Naive thymus-derived CD4-positive, alpha-beta T cell (primary cell): ENCODE measurements at regions of chr4 and their contacts with region 1.

Region 1: DNA sequence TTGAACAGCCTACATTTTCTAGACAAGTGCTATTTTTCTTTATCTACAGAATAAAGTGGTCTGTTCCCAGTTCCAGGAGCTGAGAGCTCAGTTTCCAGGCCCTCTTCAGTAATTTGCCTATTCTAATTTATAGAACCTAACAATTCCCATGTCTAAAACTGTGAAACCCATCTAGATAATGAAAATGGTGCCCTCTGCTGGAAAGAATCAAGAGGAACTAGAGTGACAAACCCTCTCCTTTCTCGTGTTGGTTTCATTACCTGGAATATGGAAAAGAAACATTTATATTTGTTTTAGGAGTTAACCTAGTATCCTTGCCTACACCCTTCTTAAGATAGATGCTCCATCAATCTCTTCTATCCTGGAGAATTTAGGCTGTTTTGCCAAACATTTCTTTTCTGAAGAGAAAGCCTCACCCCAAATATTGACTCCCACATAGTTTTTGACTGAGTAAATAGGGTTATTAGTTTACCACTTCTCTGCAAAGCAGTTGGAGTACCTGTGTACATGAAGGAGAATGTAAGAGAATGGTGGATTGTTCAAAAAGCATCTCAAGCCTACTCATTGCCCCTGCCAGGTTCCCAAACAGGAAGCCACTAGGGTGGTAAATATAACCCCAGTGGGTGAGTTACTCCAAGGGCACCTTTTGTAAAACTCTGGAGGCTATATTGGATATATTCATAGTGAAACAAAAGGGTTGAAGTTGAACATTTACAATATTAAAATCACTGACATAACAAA is 121.6 kb downstream of the RASL11B start:
- DNase-seq: peak in 6 of 9 donors; percentile 14 to 50 (median 40)
- ATAC-seq: peak; percentile 50
- H3K4me3 ChIP-seq: no peak overlapping the region
- H3K4me3 Mint-ChIP-seq: peak overlapping the region in 1 of 10 donors; percentile 9
- H3K27ac ChIP-seq: no peak overlapping the region
- H3K27ac Mint-ChIP-seq: no peak overlapping the region
- H3K4me1 ChIP-seq: no peaks in the 10 kb centered on the region
- H3K4me1 Mint-ChIP-seq: peaks cover 0 to 11% (median 3%) of the 10 kb centered on the region in 7 donors
- H3K27me3 ChIP-seq: no peaks in the 10 kb centered on the region
- H3K27me3 Mint-ChIP-seq: no peaks in the 10 kb centered on the region

Region 2: GRCh38 chr4:51895813-51896408 is 1087.8 kb before region 1 on chr4:
- CTCF ChIA-PET with region 1: no interaction called
- POLR2A ChIA-PET with region 1: no interaction called
- intact Hi-C with region 1: loop called in 1 of 2 experiments (anchors 10 kb)
- DNase-seq: peak in 7 of 9 donors; percentile 13 to 37 (median 24)
- ATAC-seq: peak; percentile 92
- H3K4me3 ChIP-seq: no peak overlapping the region
- H3K4me3 Mint-ChIP-seq: no peak overlapping the region
- H3K27ac ChIP-seq: no peak overlapping the region
- H3K27ac Mint-ChIP-seq: peak overlapping the region in 1 of 9 donors; percentile 29
- H3K4me1 ChIP-seq: no peaks in the 10 kb centered on the region
- H3K4me1 Mint-ChIP-seq: peaks cover 0 to 15% (median 0%) of the 10 kb centered on the region in 7 donors
- H3K27me3 ChIP-seq: no peaks in the 10 kb centered on the region
- H3K27me3 Mint-ChIP-seq: no peaks in the 10 kb centered on the region

Region 3: DNA sequence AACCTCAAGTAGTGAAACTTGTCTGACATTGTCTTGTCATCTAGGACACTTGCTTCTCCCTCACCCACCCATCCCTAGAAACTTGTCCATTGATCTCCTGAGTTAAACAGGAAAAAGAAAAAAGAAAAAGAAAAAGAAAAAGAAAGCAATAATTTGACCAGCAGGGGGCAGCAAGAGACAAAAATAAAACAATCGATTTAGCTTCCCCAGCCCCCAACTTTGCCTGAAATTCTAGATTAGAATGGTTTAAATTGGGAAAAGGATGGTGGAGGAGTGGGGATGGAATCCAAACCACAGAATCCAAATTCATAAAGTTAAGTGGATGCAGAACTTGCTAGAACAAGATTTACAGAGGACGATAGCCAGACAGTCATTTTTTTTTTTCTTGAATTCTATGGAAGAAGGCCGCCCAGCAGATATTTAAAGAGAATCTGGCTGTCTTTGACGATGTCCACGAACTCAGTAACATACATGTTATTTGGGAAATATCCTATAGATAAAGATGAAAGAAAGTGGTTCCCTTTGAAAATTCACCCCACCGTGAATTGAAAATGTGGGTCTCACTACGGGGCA is 607.5 kb before region 1 on chr4:
- CTCF ChIA-PET with region 1: interaction called, 10 read pairs
- POLR2A ChIA-PET with region 1: no interaction called
- intact Hi-C with region 1: loop called in 1 of 2 experiments (anchors 1 kb)
- DNase-seq: peak in 5 of 9 donors; percentile 17 to 25 (median 21)
- ATAC-seq: no peak
- H3K4me3 ChIP-seq: no peak overlapping the region
- H3K4me3 Mint-ChIP-seq: no peak overlapping the region
- H3K27ac ChIP-seq: no peak overlapping the region
- H3K27ac Mint-ChIP-seq: no peak overlapping the region
- H3K4me1 ChIP-seq: no peaks in the 10 kb centered on the region
- H3K4me1 Mint-ChIP-seq: peaks cover 0 to 3% (median 0%) of the 10 kb centered on the region in 7 donors
- H3K27me3 ChIP-seq: peaks cover 0 to 5% of the 10 kb centered on the region in 2 donors
- H3K27me3 Mint-ChIP-seq: peaks cover 8 to 34% (median 15%) of the 10 kb centered on the region in 5 donors

Region 4: DNA sequence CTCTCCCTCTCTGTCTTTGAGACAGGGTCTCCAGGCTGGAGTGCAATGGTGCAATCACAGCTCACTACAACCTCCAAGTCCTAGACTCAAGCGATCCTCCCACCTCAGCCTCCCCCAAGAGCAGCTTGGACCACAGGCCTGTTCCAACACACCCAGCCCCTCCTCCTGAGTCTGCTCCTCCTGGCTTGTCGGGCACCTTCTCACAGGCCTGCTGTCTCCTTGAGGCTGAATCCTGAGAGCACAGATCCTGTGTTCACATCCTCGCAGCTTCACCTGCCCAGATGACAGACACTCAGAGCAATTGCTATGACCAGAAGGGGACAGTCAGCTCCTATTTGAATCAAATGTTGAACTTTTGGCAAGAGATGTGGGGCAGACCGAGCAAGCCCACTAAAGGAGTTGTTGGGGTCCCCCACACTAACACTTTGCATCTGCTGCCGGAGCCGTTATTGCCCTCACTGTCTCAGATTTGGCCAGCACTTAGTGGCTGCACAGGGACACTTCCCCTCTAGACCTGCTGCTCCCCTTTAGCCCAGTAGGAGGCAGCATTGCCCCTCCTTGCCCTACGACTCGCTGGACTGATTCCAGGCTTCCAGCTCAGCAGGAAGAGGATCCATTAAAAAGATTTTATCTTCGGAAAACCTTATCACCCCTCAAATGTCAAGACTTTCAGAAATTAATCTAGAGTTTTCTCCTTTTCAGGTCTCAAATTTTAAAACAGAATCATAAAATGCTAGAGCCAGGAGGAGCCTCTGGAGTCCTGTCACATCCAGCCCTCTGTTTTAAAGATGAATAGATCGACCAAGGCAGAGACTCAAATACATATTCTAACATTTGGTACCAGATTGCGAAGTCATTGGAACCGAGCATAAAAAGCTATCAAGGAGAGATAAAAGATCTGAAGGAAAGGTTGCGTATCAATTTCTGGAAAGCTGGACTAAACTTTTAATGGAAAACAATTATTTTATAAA is 438.3 kb before region 1 on chr4:
- CTCF ChIA-PET with region 1: interaction called, 11 read pairs
- POLR2A ChIA-PET with region 1: no interaction called
- intact Hi-C with region 1: no loop called
- DNase-seq: peak; percentile 2 to 63 (median 26)
- ATAC-seq: peak; percentile 75
- H3K4me3 ChIP-seq: no peak overlapping the region
- H3K4me3 Mint-ChIP-seq: no peak overlapping the region
- H3K27ac ChIP-seq: no peak overlapping the region
- H3K27ac Mint-ChIP-seq: no peak overlapping the region
- H3K4me1 ChIP-seq: no peaks in the 10 kb centered on the region
- H3K4me1 Mint-ChIP-seq: no peaks in the 10 kb centered on the region
- H3K27me3 ChIP-seq: no peaks in the 10 kb centered on the region
- H3K27me3 Mint-ChIP-seq: peaks cover 5 to 24% (median 6%) of the 10 kb centered on the region in 5 donors

Region 5: GRCh38 chr4:52588097-52588782 is 395.5 kb before region 1 on chr4:
- CTCF ChIA-PET with region 1: no interaction called
- POLR2A ChIA-PET with region 1: no interaction called
- intact Hi-C with region 1: loop called in 1 of 2 experiments (anchors 1 kb)
- DNase-seq: peak in 1 of 9 donors; percentile 2
- ATAC-seq: peak; percentile 25
- H3K4me3 ChIP-seq: no peak overlapping the region
- H3K4me3 Mint-ChIP-seq: peak overlapping the region in 1 of 10 donors; percentile 31
- H3K27ac ChIP-seq: no peak overlapping the region
- H3K27ac Mint-ChIP-seq: peak overlapping the region in 2 of 9 donors; percentile 38 to 72
- H3K4me1 ChIP-seq: peaks cover 0 to 5% of the 10 kb centered on the region in 2 donors
- H3K4me1 Mint-ChIP-seq: peaks cover 6 to 24% (median 8%) of the 10 kb centered on the region in 7 donors
- H3K27me3 ChIP-seq: no peaks in the 10 kb centered on the region
- H3K27me3 Mint-ChIP-seq: peaks cover 0 to 10% (median 5%) of the 10 kb centered on the region in 5 donors

Region 6: DNA sequence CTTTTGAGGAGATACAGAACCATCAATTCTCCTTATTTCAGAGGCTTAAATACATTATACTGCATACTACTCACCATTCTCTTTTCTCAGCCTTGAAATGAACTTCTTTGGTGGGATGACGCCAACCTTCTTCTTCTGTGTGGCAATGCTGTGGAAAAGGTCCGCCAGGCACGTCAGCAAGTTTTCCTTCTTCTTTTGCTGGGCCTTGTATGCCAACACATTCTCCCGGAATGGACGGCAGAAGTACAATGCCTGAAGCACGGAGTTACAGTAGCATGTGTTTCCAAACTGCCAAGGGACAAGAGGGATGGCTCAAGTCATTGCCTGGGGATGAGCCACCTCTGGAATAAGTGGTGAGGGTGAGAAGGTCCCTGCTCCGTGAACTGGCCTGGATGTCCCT is 355.9 kb before region 1 on chr4:
- CTCF ChIA-PET with region 1: no interaction called
- POLR2A ChIA-PET with region 1: no interaction called
- intact Hi-C with region 1: loop called in 1 of 2 experiments (anchors 1 kb)
- DNase-seq: no peak
- ATAC-seq: no peak
- H3K4me3 ChIP-seq: no peak overlapping the region
- H3K4me3 Mint-ChIP-seq: no peak overlapping the region
- H3K27ac ChIP-seq: no peak overlapping the region
- H3K27ac Mint-ChIP-seq: no peak overlapping the region
- H3K4me1 ChIP-seq: no peaks in the 10 kb centered on the region
- H3K4me1 Mint-ChIP-seq: peaks cover 0 to 3% (median 0%) of the 10 kb centered on the region in 7 donors
- H3K27me3 ChIP-seq: no peaks in the 10 kb centered on the region
- H3K27me3 Mint-ChIP-seq: no peaks in the 10 kb centered on the region

Region 7: GRCh38 chr4:52659001-52659721 is 324.6 kb before region 1 on chr4 and contains the start of gene USP46:
- CTCF ChIA-PET with region 1: no interaction called
- POLR2A ChIA-PET with region 1: no interaction called
- intact Hi-C with region 1: loop called in 1 of 2 experiments (anchors 10 kb)
- DNase-seq: peak in 7 of 9 donors; percentile 3 to 65 (median 15)
- ATAC-seq: peak; percentile 86
- H3K4me3 ChIP-seq: peak within 1 kb of the TSS; percentile 52
- H3K4me3 Mint-ChIP-seq: peak within 1 kb of the TSS; percentile 83 to 92 (median 87)
- H3K27ac ChIP-seq: peak within 1 kb of the TSS; percentile 37
- H3K27ac Mint-ChIP-seq: peak within 1 kb of the TSS in 6 of 9 donors; percentile 12 to 77 (median 58)
- H3K4me1 ChIP-seq: peaks cover 5% of the 10 kb centered on the region in 2 donors
- H3K4me1 Mint-ChIP-seq: peaks cover 12 to 23% (median 17%) of the 10 kb centered on the region in 7 donors
- H3K27me3 ChIP-seq: no peaks in the 10 kb centered on the region
- H3K27me3 Mint-ChIP-seq: peaks cover 0 to 24% (median 16%) of the 10 kb centered on the region in 5 donors
- total RNA-seq, gene USP46: 3.0 to 11.7 (median 4.0) TPM

Region 8: DNA sequence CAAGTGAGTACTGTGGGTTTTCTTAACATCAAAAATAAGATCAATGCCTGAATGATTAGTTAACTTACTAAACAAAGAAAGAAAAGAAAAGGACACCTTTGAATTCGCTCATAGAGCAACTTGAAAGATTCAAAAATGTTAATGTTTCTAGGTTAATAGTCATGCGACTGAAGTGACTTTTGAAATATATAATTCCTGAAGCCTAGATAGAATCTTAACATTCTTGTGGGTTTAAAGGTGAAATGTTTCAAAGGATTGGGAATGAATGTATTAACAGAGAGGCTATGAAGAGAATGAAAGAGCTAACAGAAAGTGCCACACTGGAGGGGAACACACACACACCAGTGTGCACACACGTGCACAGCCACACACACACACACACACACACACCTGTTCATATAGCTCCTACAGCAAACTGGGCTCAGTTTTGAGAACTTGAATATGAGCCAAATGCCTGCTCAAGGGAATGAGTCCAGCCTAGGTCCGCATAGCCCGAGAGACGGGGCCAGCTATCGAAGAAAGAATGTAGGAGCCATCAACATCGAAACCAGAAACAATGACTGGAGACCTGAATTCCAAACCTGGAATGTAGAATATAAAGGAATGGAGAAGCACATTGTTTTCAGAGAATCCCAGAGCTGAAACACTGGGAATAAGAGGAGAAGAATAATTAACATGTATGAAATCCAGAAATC is 195.1 kb before region 1 on chr4:
- CTCF ChIA-PET with region 1: no interaction called
- POLR2A ChIA-PET with region 1: no interaction called
- intact Hi-C with region 1: no loop called
- DNase-seq: no peak
- ATAC-seq: no peak
- H3K4me3 ChIP-seq: no peak overlapping the region
- H3K4me3 Mint-ChIP-seq: no peak overlapping the region
- H3K27ac ChIP-seq: no peak overlapping the region
- H3K27ac Mint-ChIP-seq: no peak overlapping the region
- H3K4me1 ChIP-seq: no peaks in the 10 kb centered on the region
- H3K4me1 Mint-ChIP-seq: no peaks in the 10 kb centered on the region
- H3K27me3 ChIP-seq: no peaks in the 10 kb centered on the region
- H3K27me3 Mint-ChIP-seq: peaks cover 0 to 7% (median 0%) of the 10 kb centered on the region in 5 donors